ENCODE measurements at regions of chr17 and their contacts with region 1.

Region 1: GRCh38 chr17:78421484-78422266 is 43.2 kb downstream of the PGS1 start:
- DNase-seq: peak; percentile 48 to 81 (median 64)
- ATAC-seq: peak; percentile 94
- H3K4me3 ChIP-seq: no peak overlapping the region
- H3K4me3 Mint-ChIP-seq: no peak overlapping the region
- H3K27ac ChIP-seq: no peak overlapping the region
- H3K27ac Mint-ChIP-seq: peak overlapping the region in 8 of 9 donors; percentile 11 to 69 (median 49)
- H3K4me1 ChIP-seq: peaks cover 0 to under 1% of the 10 kb centered on the region in 2 donors
- H3K4me1 Mint-ChIP-seq: peaks cover 9 to 52% (median 23%) of the 10 kb centered on the region in 7 donors
- H3K27me3 ChIP-seq: no peaks in the 10 kb centered on the region
- H3K27me3 Mint-ChIP-seq: no peaks in the 10 kb centered on the region

Region 2: GRCh38 chr17:78082988-78083387 is 338.7 kb before region 1 on chr17:
- CTCF ChIA-PET with region 1: interaction called, 4 read pairs
- POLR2A ChIA-PET with region 1: no interaction called
- intact Hi-C with region 1: loop called in 1 of 2 experiments (anchors 10 kb)
- DNase-seq: no peak
- ATAC-seq: no peak
- H3K4me3 ChIP-seq: no peak overlapping the region
- H3K4me3 Mint-ChIP-seq: no peak overlapping the region
- H3K27ac ChIP-seq: no peak overlapping the region
- H3K27ac Mint-ChIP-seq: no peak overlapping the region
- H3K4me1 ChIP-seq: no peaks in the 10 kb centered on the region
- H3K4me1 Mint-ChIP-seq: peaks cover 0 to 12% (median 0%) of the 10 kb centered on the region in 7 donors
- H3K27me3 ChIP-seq: no peaks in the 10 kb centered on the region
- H3K27me3 Mint-ChIP-seq: no peaks in the 10 kb centered on the region

Region 3: DNA sequence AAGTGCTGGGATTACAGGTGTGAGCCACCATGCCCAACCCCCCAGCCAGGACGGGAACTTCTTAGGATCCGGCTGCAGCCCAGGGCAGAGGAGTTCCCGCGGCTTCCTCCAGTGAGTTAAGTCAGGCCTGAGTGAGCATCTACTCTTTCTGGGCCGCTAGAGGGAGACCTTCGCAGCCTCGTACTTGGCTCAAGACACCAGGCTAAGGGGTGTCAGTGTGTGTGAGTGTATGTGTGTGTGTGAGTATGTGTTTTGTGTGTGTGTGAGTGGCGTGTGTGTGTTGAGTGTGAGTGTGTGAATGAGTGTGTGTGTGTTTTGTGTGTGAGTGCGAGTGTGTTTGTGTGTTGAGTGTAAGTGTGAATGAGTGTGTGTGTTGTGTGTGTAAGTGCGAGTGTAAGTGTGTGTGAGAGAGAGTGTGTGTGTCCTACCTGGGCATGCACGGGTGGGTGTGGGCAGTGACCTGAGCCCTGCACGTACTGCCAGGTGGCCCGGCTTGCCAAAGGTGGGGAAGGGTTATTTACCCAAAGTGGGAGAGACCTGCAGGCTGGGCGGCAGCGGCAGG is 131.8 kb before region 1 on chr17:
- CTCF ChIA-PET with region 1: interaction called, 32 read pairs
- POLR2A ChIA-PET with region 1: interaction called, 7 read pairs
- intact Hi-C with region 1: loop called (anchors 1 kb)
- DNase-seq: peak; percentile 41 to 82 (median 71)
- ATAC-seq: peak; percentile 97
- H3K4me3 ChIP-seq: no peak overlapping the region
- H3K4me3 Mint-ChIP-seq: no peak overlapping the region
- H3K27ac ChIP-seq: no peak overlapping the region
- H3K27ac Mint-ChIP-seq: no peak overlapping the region
- H3K4me1 ChIP-seq: peaks cover 4 to 8% of the 10 kb centered on the region in 2 donors
- H3K4me1 Mint-ChIP-seq: peaks cover 0 to 10% (median 5%) of the 10 kb centered on the region in 7 donors
- H3K27me3 ChIP-seq: no peaks in the 10 kb centered on the region
- H3K27me3 Mint-ChIP-seq: no peaks in the 10 kb centered on the region

Measured in naive thymus-derived CD4-positive, alpha-beta T cell (primary cell).